ENCODE measurements at regions of chr5 and their contacts with region 1.

Region 1: DNA sequence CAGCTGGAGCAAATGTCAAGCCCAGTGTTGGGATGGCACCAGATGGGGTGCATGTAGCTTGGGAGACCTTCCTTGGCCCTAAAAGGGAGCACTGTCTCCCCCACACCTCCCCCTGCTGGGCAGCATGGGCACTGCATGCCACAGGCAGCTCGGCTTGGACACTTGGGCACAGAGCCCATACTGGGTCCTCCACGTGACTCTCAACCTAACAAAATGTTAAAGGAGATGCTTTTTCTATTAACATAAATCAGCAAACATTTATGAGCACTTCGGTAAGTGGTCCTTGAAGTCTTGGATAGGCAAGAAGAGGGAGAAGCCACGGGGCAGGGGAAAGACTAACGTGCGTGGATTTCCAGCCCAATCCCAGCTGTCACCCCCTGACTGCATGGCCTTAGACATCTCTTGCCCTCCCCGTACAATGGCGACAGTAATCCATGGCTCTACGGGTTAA is 23.9 kb upstream of the MAPK9 start:
- DNase-seq: peak in 1 of 2 experiments; percentile 93
- H3K4me3 ChIP-seq: no peak overlapping the region
- H3K27ac ChIP-seq: no peak overlapping the region
- H3K4me1 ChIP-seq: no peaks in the 10 kb centered on the region
- H3K27me3 ChIP-seq: no peaks in the 10 kb centered on the region
- CTCF ChIP-seq: peak; percentile 91 to 99 (median 98)
- EP300 ChIP-seq: no peak
- POLR2A ChIP-seq: no peak
- RAD21 ChIP-seq: peak; percentile 59 to 72

Region 2: DNA sequence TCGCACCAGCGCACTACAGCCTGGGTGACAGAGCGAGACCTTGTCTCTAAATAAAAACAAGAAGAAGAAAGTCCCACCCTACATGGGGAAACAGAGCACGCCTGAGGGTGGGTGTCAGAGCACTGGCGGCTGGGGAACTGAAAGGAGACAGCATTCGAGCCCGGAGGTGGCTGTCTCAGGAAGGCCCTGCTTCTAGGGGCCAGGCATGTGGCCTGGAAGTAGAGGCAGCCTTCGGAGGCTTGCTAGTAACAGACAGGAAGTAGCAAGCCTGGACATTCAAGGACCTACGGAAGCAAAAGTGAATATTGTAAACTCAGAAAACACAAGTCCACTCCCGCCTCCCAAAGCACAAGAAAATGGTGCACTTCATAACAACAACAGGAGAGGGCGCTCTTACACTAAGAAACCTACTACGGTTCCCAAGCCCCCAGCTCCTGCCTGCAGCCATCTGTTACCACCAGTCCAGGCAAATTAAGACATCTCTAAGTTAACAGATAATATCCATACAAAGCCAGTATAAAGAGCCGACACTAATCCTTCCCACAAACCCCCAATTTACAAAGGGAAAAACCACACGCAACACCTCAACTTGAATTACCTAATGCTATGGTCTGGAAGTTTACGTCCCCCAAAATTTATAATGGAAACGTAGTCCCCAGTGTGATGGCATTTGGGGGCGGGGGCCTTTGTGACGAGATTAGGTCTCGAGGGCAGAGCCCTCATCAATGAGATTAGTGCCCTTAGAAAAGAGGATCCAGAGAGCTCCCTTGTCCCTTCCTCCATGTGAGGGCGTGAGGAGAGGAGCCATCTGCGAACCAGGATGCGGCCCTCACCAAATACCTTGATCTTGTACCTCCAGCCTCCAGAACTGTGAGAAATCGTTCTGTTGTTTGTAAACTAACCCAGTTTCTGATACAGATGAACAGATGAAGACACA is 114.5 kb before region 1 on chr5:
- CTCF ChIA-PET with region 1: interaction called, 21 read pairs
- POLR2A ChIA-PET with region 1: interaction called, 3 read pairs
- DNase-seq: peak; percentile 29 to 88
- H3K4me3 ChIP-seq: no peak overlapping the region
- H3K27ac ChIP-seq: no peak overlapping the region
- H3K4me1 ChIP-seq: no peaks in the 10 kb centered on the region
- H3K27me3 ChIP-seq: no peaks in the 10 kb centered on the region
- CTCF ChIP-seq: peak; percentile 54 to 87 (median 84)
- EP300 ChIP-seq: no peak
- POLR2A ChIP-seq: no peak
- RAD21 ChIP-seq: peak; percentile 91 to 94

Region 3: GRCh38 chr5:180304431-180305375 is 11.1 kb before region 1 on chr5:
- CTCF ChIA-PET with region 1: interaction called, 93 read pairs
- POLR2A ChIA-PET with region 1: interaction called, 10 read pairs
- DNase-seq: no peak
- H3K4me3 ChIP-seq: no peak overlapping the region
- H3K27ac ChIP-seq: no peak overlapping the region
- H3K4me1 ChIP-seq: no peaks in the 10 kb centered on the region
- H3K27me3 ChIP-seq: no peaks in the 10 kb centered on the region
- CTCF ChIP-seq: no peak
- EP300 ChIP-seq: no peak
- POLR2A ChIP-seq: peak in 1 of 2 experiments; percentile 16; a peak in 1 of 3 replicates
- RAD21 ChIP-seq: no peak

Region 4: DNA sequence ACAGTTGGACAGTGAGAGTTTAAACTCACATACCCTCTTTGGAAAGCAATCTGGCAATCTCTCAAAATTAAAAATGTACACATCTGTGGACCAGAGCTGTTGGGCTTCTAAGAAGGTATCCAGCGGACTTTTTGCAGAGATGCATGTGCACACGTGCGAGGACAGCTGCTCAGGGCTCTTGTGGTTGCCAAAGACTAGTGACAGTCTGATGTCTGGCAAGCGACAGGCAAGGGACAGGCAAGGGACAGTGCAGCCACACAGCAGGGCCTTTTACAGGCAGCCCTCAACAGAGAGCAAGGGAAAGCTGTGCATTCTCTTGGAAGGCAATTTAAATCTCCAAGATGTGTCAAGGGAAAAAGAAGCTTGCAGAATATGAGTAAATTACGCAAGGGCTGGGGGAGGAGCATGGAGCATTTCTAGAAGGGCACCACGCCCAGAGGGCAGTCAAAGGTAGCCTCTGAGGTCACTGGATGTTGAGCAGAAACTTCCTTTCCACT is 28.1 kb after region 1 on chr5:
- CTCF ChIA-PET with region 1: interaction called, 12 read pairs
- POLR2A ChIA-PET with region 1: interaction called, 4 read pairs
- DNase-seq: no peak
- H3K4me3 ChIP-seq: peak overlapping the region in 1 of 4 experiments; percentile 25; a peak in 2 of 8 replicates
- H3K27ac ChIP-seq: peak overlapping the region; percentile 20; the same call in 1 of the 2 replicates
- H3K4me1 ChIP-seq: peaks cover 36 to 65% (median 47%) of the 10 kb centered on the region in 4 experiments
- H3K27me3 ChIP-seq: no peaks in the 10 kb centered on the region
- CTCF ChIP-seq: no peak
- EP300 ChIP-seq: no peak
- POLR2A ChIP-seq: no peak
- RAD21 ChIP-seq: no peak

Measured in H1 (cell line).